ENCODE measurements at regions of chr4 and their contacts with region 1.

Region 1: DNA sequence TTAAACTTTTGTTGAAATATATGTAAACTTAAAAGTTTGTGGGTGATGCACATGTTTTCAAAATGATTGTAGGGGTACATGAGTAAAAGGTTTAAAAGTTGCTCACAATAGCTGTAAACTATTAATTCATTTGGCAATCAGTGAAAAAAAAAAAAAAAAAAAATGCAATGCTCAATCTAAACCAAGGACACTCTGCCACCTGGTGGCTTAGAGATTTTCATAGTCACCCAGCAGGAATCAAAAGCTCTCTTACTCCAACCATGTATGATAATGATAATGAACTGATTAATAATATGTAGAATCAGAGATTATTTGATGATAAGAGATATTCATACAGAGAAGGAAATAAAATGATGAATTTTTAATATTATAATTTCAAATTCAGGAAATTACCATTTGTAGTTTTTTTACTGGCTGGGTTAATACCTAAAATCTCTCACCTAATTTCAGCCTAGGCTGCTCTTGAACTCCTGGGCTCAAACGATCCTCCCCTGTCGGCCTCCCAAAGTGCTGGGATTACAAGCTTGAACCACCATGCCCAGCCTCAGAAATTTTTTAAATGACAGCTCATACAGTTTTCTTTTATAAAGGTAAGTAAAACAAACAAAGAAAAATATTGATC is 46.9 kb upstream of the SLC25A4 start:
- DNase-seq: no peak
- H3K4me3 ChIP-seq: no peak overlapping the region
- H3K27ac ChIP-seq: no peak overlapping the region
- H3K4me1 ChIP-seq: peaks cover 0 to 4% (median 0%) of the 10 kb centered on the region in 4 experiments; a peak in 1 of 7 replicates
- H3K27me3 ChIP-seq: no peaks in the 10 kb centered on the region
- CTCF ChIP-seq: peak in 2 of 3 experiments; percentile 50 to 56; a peak in 2 of 4 replicates
- EP300 ChIP-seq: no peak
- POLR2A ChIP-seq: no peak
- RAD21 ChIP-seq: peak; percentile 80 to 82

Region 2: DNA sequence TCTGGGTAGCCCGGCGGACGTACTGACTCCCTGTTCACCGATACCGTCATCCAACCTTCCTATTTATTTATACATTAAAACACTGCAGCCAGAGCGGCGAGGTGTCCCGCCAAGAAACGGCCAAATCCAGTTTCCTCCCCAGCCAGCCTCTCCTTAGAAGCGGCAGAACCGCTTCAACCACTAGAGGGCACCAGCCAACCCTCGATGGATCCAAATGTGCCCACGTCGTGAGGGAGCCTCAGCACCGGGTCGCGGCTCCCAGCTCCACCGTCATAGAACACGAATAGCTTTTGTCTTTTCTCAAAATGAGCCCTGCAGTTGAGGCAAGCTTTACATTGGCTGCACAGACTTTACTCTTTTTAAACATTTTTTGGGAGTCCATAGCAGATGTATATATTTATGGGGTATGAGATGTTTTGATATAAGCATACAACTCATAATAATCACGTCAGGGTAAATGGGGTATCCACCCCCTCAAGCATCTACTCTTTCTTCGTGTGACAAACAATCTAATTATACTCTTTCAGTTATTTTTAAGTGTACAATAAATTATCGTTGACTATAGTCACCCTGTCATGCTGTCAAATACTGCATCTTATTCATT is 90.8 kb before region 1 on chr4:
- CTCF ChIA-PET with region 1: interaction called, 14 read pairs
- POLR2A ChIA-PET with region 1: no interaction called
- DNase-seq: peak in 1 of 2 experiments; percentile 93
- H3K4me3 ChIP-seq: peak overlapping the region; percentile 13 to 55 (median 33); a peak in 7 of 8 replicates
- H3K27ac ChIP-seq: no peak overlapping the region
- H3K4me1 ChIP-seq: peaks cover 0 to 9% (median 5%) of the 10 kb centered on the region in 4 experiments; a peak in 3 of 7 replicates
- H3K27me3 ChIP-seq: peaks cover 0 to 25% (median 18%) of the 10 kb centered on the region in 4 experiments; a peak in 6 of 7 replicates
- CTCF ChIP-seq: peak; percentile 85 to 92 (median 88)
- EP300 ChIP-seq: no peak
- POLR2A ChIP-seq: no peak
- RAD21 ChIP-seq: peak; percentile 87 to 91

Region 3: GRCh38 chr4:185054876-185055275 is 41.3 kb before region 1 on chr4:
- CTCF ChIA-PET with region 1: interaction called, 14 read pairs
- POLR2A ChIA-PET with region 1: no interaction called
- DNase-seq: no peak
- H3K4me3 ChIP-seq: peak overlapping the region in 1 of 4 experiments; percentile 25; a peak in 2 of 8 replicates
- H3K27ac ChIP-seq: no peak overlapping the region
- H3K4me1 ChIP-seq: peaks cover 3 to 14% (median 8%) of the 10 kb centered on the region in 4 experiments; a peak in 5 of 7 replicates
- H3K27me3 ChIP-seq: no peaks in the 10 kb centered on the region
- CTCF ChIP-seq: no peak
- EP300 ChIP-seq: no peak
- POLR2A ChIP-seq: no peak
- RAD21 ChIP-seq: no peak

Region 4: DNA sequence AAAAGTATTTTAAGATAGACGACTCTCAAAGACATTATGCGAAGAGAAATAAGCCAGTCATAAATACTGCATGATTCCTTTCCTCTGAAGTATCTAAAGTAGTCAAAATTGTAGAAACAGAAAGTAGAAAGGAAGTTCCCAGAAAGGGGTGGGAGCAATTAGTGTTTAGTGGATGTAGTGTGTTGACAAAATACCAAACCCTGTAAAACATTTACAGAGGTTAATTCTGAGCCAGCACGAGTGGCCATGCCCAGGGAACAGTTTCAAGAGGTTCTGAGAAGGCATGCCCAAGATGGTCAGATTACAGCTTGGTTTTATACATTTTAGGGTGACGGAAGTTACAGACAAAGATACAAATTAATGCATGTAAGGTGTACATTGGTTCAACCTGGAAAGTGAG is 12.5 kb after region 1 on chr4:
- CTCF ChIA-PET with region 1: interaction called, 17 read pairs
- POLR2A ChIA-PET with region 1: interaction called, 11 read pairs
- DNase-seq: no peak
- H3K4me3 ChIP-seq: peak overlapping the region in 1 of 4 experiments; percentile 28; a peak in 1 of 8 replicates
- H3K27ac ChIP-seq: peak overlapping the region; percentile 37; the same call in 1 of the 2 replicates
- H3K4me1 ChIP-seq: peaks cover 6 to 26% (median 13%) of the 10 kb centered on the region in 4 experiments
- H3K27me3 ChIP-seq: no peaks in the 10 kb centered on the region
- CTCF ChIP-seq: no peak
- EP300 ChIP-seq: no peak
- POLR2A ChIP-seq: no peak
- RAD21 ChIP-seq: no peak

Region 5: DNA sequence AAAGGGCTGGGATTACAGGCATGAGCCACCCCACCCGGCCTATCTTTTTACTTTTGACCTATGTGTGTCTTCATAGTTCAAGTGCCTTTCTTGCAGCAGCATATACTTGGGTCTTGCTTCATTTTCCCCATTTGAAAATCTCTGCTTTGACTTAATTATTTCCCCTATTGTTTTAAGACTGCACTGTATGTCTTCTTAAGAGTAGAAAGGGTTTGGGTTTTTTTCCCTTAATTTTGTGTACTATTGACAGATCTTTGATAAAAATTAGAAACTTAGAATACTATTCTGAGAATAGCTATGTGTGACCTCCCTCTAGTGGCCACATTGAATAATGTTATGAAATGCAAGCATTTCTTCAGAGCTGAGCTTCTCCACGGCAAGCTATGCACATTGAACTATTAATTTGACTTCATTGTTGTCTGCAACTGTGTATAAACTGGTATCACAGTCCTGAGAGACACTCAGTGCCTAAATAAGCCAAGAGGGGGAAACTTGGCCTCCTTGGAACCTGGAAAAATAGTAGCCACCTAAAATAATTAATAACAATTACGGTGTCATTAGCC is 38.2 kb after region 1 on chr4:
- CTCF ChIA-PET with region 1: interaction called, 48 read pairs
- POLR2A ChIA-PET with region 1: no interaction called
- DNase-seq: no peak
- H3K4me3 ChIP-seq: no peak overlapping the region
- H3K27ac ChIP-seq: no peak overlapping the region
- H3K4me1 ChIP-seq: no peaks in the 10 kb centered on the region
- H3K27me3 ChIP-seq: peaks cover 0 to 4% (median 0%) of the 10 kb centered on the region in 4 experiments; a peak in 1 of 7 replicates
- CTCF ChIP-seq: peak in 2 of 3 experiments; percentile 60 to 63; a peak in 3 of 4 replicates
- EP300 ChIP-seq: no peak
- POLR2A ChIP-seq: no peak
- RAD21 ChIP-seq: peak; percentile 84 to 86

Region 6: GRCh38 chr4:185265942-185266341 is 169.8 kb after region 1 on chr4:
- CTCF ChIA-PET with region 1: no interaction called
- POLR2A ChIA-PET with region 1: no interaction called
- DNase-seq: no peak
- H3K4me3 ChIP-seq: no peak overlapping the region
- H3K27ac ChIP-seq: no peak overlapping the region
- H3K4me1 ChIP-seq: peaks cover 0 to 3% (median 0%) of the 10 kb centered on the region in 4 experiments; a peak in 1 of 7 replicates
- H3K27me3 ChIP-seq: no peaks in the 10 kb centered on the region
- CTCF ChIP-seq: no peak
- EP300 ChIP-seq: no peak
- POLR2A ChIP-seq: no peak
- RAD21 ChIP-seq: no peak

Region 7: DNA sequence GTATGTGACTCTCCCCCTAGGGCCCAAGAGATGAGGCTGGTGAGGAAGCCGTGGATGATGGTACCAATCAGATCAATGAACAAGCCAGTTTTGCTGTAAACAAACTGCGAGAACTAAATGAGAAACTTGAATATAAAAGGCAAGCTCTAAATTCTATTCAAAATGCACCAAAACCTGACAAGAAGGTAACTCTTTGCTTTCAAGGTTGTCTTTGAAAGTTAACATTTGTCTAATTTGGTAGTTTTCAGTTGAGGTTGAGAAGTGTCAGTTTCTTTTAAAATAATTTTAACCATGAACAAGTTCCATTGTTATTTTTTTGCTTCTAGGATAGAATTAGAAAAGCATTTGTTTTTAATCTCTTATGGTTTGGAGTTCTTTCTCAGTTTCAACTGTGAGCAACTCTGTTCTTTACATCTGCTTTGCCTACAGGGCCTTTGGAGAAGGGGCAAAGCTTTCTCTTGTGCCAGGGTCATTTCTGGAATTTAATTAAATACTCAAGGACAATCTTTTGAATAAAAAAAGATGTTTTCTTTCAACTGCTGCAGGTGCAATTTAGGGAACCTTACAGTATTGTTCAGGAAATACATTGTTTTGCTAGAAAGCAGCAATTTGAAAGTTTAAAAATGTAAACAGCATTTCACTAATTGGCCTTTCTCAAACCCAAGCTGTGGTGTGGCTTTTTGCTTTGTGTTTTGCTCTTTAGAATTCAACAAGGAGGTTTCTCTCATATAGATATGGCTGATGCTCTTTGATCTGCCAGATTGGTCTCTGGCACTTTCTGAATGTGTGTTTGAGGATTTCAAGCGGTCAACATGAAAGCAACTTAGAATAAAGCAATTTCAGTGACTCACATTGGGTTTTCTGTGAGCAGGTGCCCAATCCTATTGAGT is 236.7 kb after region 1 on chr4:
- CTCF ChIA-PET with region 1: no interaction called
- POLR2A ChIA-PET with region 1: no interaction called
- DNase-seq: no peak
- H3K4me3 ChIP-seq: no peak overlapping the region
- H3K27ac ChIP-seq: no peak overlapping the region
- H3K4me1 ChIP-seq: peaks cover 0 to 2% (median 0%) of the 10 kb centered on the region in 4 experiments; a peak in 2 of 7 replicates
- H3K27me3 ChIP-seq: no peaks in the 10 kb centered on the region
- CTCF ChIP-seq: no peak
- EP300 ChIP-seq: no peak
- POLR2A ChIP-seq: no peak
- RAD21 ChIP-seq: no peak

Measured in H1 (cell line).